ENCODE measurements at regions of chr4 and their contacts with region 1.

Region 1: DNA sequence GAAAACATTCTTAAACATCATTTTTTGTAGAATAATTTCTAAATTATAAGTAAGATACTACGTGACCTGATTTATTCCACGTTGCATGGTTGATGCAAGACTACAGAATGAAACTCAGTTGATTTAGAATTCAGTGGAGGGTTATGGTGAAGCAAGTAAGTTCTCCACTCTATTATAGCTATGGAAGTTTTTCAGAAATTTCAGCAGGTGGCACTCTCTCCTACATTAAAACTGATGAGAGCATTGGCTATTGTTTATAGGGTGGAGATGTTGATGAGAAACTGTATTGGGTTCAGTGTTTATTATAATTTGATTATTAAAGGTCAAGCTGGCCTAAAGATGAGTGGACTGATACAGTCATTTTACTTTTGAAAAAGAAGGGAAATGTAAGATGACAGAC is 88.0 kb downstream of the FNIP2 start:
- DNase-seq: no peak
- ATAC-seq: peak; percentile 63

Region 2: GRCh38 chr4:159197260-159197884 is 340.5 kb after region 1 on chr4:
- intact Hi-C with region 1: loop called (anchors 5 kb)
- DNase-seq: no peak
- ATAC-seq: peak; percentile 48

Region 3: DNA sequence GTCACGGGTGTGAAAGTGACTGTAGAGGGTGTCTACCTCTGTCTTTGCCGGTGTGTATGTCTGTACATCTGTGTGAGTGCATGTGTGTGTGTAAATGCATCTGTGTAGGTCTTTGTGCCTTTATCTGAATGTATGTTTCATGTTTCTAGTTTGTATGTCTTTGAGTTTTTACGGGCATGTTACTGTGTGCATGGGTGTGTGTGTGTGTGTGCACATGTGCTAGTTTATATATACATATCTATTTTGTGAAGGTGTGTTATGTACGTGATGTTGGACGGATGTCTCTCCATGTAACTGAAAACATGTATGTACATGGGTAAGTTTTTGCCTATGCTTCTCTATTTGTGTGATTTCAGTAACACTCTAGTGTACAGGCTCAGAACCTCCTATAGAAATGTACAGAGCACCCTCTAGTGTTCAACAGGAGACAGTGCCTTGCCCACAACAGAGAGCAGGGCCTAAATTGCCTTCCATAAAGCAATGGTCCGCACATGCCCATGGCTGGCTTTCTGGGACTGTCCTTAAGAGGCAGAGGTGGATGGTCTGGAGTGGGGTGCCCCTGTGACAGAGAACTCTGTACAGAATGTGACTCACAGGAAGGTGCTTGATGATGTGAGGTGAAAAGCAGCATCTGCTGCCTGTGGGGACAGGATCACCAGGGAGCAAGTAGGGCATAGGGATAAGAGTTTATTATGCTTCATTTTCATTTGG is 589.6 kb after region 1 on chr4:
- intact Hi-C with region 1: loop called (anchors 10 kb)
- DNase-seq: peak; percentile 42
- ATAC-seq: peak; percentile 98